ENCODE measurements at regions of chr16 and their contacts with region 1.

Region 1: GRCh38 chr16:1899641-1900451 is 18.4 kb downstream of the HS3ST6 start:
- DNase-seq: no peak
- ATAC-seq: no peak
- H3K4me3 ChIP-seq: no peak overlapping the region
- H3K27ac ChIP-seq: no peak overlapping the region
- H3K4me1 ChIP-seq: no peaks in the 10 kb centered on the region
- H3K27me3 ChIP-seq: no peaks in the 10 kb centered on the region
- CTCF ChIP-seq: no peak

Region 2: DNA sequence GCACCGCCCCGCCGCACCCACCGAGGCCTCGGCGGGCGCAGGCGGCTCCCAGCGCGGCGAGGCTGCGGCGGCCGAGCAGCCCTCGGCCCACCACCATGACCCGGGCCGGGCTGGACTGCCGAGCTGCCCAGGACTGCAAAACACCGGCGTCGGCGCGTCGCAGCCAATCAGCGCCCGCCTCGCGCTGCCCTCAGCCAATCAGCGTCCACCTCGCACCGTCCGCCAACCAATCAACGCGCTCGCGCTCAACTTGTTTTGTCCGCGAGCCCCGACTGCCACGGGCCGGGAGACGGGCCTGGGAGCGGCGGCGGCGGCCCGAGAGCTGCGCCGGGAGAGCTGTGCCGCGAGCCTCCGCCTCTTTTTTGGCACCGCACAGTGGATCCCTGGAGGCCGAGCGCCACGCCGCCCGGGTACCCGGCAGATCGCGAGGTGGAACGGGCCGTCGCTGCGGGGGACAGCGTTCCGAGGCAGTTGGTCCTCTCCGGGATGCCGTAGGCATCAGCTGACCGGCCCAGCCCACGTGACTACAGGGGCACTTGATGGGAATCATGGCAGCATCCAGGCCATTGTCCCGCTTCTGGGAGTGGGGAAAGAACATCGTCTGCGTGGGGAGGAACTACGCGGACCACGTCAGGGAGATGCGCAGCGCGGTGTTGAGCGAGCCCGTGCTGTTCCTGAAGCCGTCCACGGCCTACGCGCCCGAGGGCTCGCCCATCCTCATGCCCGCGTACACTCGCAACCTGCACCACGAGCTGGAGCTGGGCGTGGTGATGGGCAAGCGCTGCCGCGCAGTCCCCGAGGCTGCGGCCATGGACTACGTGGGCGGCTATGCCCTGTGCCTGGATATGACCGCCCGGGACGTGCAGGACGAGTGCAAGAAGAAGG is 72.9 kb before region 1 on chr16 and contains the starts of genes FAHD1 and HAGH:
- CTCF ChIA-PET with region 1: no interaction called
- POLR2A ChIA-PET with region 1: no interaction called
- in situ Hi-C with region 1: no loop called
- intact Hi-C with region 1: no loop called
- DNase-seq: peak; percentile 85
- ATAC-seq: peak; percentile 93
- H3K4me3 ChIP-seq: peak within 1 kb of the TSS; percentile 99 to 100
- H3K27ac ChIP-seq: peak within 1 kb of the TSS; percentile 96
- H3K4me1 ChIP-seq: peaks cover 17% of the 10 kb centered on the region
- H3K27me3 ChIP-seq: no peaks in the 10 kb centered on the region
- CTCF ChIP-seq: no peak
- total RNA-seq, gene FAHD1: 34.6 TPM
- total RNA-seq, gene HAGH: 58.9 TPM

Region 3: DNA sequence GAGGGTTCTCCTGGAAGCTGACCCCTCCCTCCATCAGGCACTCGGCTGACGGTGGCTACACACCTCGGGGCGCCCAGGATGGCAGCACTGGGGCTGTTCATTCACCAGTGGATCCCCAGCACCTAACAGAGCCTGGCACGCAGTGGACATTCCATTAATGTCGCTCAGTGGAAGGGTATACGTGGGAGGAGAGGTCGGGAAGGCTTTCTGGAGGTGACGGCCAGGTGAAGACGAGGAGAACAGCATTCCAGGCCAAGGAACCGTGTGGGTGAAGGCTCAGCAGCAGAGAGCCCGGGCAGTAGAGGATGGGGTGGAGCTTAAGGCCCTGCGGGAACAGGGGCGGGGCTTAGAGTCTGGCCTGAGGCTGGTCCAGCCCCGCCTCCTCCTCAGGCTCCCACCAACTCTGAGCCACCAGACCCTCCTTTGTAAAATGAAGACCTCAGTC is 20.9 kb after region 1 on chr16:
- CTCF ChIA-PET with region 1: no interaction called
- POLR2A ChIA-PET with region 1: interaction called, 12 read pairs
- in situ Hi-C with region 1: no loop called
- intact Hi-C with region 1: no loop called
- DNase-seq: no peak
- ATAC-seq: peak; percentile 49
- H3K4me3 ChIP-seq: peak overlapping the region in 1 of 2 experiments; percentile 17; a peak in 1 of 4 replicates
- H3K27ac ChIP-seq: no peak overlapping the region
- H3K4me1 ChIP-seq: peaks cover 26% of the 10 kb centered on the region
- H3K27me3 ChIP-seq: peaks cover 2% of the 10 kb centered on the region; the same call in 1 of the 2 replicates
- CTCF ChIP-seq: no peak

Region 4: GRCh38 chr16:2147981-2148671 is 248.3 kb after region 1 on chr16 and contains the start of gene RAB26:
- CTCF ChIA-PET with region 1: no interaction called
- POLR2A ChIA-PET with region 1: no interaction called
- in situ Hi-C with region 1: no loop called
- intact Hi-C with region 1: no loop called
- DNase-seq: no peak
- ATAC-seq: peak; percentile 59
- H3K4me3 ChIP-seq: peak within 1 kb of the TSS; percentile 59 to 67
- H3K27ac ChIP-seq: peak within 1 kb of the TSS; percentile 100
- H3K4me1 ChIP-seq: peaks cover 50% of the 10 kb centered on the region
- H3K27me3 ChIP-seq: no peaks in the 10 kb centered on the region
- CTCF ChIP-seq: no peak
- total RNA-seq, gene RAB26: 92.2 TPM